ENCODE measurements at regions of chr12 and their contacts with region 1.

Region 1: DNA sequence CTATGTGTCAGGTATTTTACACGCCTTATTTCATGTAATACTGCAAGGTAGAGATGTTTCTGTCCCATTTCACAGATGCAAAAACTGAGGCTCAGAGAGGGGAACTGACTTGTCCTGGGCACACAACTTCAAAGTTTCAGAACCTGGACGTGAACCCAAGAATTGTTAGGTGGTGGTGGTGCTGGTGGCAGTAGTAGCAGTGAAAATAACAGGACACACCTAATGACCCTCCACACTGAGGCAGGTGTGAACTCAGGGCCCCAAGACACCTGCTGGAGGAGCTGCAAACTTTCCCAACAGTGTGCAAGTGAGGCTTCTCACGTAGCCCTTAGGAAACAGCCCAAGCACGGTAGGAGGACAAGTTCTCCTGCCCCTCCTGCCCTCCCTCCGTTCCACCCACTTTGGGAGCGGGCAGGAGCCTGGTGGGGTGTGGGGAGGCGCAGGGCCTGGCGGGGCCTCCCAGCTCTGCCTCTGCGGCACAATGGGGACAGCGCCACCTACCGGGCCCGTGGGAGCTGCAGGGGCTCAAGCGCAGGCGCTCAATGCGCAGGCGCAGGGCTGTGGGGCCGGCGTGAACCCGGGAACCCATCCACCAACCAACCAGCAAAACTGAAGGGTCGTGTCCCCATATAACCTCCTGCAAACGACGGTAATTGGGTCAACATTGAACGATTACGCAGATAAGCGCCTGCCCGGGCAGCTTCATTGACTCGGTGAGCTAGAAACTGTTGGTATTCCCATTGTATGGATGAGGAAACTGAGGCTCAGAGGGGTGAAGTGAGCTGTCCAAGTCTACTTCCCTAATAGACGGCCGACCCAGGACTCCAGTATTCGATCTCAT is 12.0 kb upstream of the TRPV4 start:
- DNase-seq: peak; percentile 96

Region 2: DNA sequence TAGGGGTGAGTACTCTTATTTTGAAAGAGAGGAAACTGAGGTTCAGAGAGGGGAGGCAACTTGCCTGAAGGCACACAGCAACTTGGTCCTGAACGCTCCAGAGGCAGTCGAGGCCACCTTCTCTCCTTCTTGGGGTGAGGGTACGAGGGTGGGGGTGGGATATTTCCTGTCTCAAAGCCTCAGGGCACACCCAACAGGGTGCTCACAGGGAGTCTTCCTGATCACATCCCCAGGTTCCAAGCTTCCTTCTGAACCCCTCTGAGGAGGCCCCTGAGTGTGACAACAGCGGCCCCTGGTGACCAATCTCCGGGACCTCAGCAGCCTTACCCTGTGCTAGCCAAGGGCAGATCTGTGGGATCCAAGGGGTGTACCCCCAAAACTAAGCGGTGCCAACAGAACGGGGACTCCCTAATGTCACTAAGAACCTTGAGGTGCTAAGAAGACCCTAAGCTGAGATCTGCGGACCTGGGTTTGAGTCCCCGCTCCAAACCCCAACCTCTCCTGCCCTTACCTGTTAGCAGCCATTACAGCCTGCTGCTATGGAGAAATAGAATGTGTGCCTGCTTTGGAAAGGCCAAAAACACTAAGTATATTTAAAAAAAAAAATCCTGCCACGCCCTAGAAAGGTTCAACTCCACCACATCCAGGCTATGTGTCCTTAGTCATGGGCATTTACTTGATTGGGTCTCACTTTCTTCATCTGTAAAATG is 69.9 kb before region 1 on chr12:
- CTCF ChIA-PET with region 1: no interaction called
- POLR2A ChIA-PET with region 1: no interaction called
- DNase-seq: peak; percentile 77

Region 3: GRCh38 chr12:109804820-109805761 is 40.1 kb before region 1 on chr12:
- CTCF ChIA-PET with region 1: interaction called, 10 read pairs
- POLR2A ChIA-PET with region 1: interaction called, 7 read pairs
- DNase-seq: peak; percentile 83

Region 4: GRCh38 chr12:109863847-109864712 is 18.9 kb after region 1 on chr12:
- CTCF ChIA-PET with region 1: interaction called, 10 read pairs
- POLR2A ChIA-PET with region 1: no interaction called
- DNase-seq: no peak

Region 5: GRCh38 chr12:109910969-109911348 is 65.8 kb after region 1 on chr12:
- CTCF ChIA-PET with region 1: no interaction called
- POLR2A ChIA-PET with region 1: no interaction called
- DNase-seq: peak; percentile 84